A673 (cell line): ENCODE measurements at regions of chr13 and their contacts with region 1.

Region 1: GRCh38 chr13:60453490-60453889 is 56.5 kb downstream of the TDRD3 start:
- DNase-seq: peak; percentile 71
- H3K4me3 ChIP-seq: no peak overlapping the region
- H3K27ac ChIP-seq: no peak overlapping the region
- H3K4me1 ChIP-seq: peaks cover 17% of the 10 kb centered on the region
- H3K27me3 ChIP-seq: no peaks in the 10 kb centered on the region
- CTCF ChIP-seq: no peak

Region 2: DNA sequence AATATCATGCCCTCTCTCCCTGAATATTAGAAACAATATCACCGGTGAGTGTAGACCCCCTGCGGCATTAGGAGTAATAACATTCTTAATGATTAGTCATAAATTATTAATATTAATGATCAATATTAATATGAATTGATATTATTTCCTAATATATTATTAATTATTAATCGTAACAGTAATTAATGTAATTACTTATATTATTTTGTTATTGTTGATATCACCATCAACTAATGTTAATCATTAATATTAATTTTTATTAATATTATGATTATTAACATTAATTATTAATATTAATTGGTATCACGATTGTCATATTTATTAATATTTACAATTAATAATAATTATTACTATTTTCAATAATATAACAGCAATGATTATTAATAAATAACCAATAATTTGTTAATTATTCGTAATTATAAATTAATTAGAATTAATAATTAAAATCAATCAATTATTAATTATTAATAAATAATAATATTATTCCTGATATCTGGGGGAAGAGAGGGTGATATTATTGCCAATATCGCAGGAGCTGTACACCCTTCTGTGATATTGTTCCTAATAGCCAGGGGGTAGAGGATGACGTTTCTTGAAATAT is 1490.9 kb after region 1 on chr13:
- CTCF ChIA-PET with region 1: no interaction called
- POLR2A ChIA-PET with region 1: no interaction called
- intact Hi-C with region 1: loop called (anchors 10 kb)
- DNase-seq: no peak
- H3K4me3 ChIP-seq: no peak overlapping the region
- H3K27ac ChIP-seq: no peak overlapping the region
- H3K4me1 ChIP-seq: no peaks in the 10 kb centered on the region
- H3K27me3 ChIP-seq: no peaks in the 10 kb centered on the region
- CTCF ChIP-seq: no peak